ENCODE measurements at regions of chr2 and their contacts with region 1.

Region 1: DNA sequence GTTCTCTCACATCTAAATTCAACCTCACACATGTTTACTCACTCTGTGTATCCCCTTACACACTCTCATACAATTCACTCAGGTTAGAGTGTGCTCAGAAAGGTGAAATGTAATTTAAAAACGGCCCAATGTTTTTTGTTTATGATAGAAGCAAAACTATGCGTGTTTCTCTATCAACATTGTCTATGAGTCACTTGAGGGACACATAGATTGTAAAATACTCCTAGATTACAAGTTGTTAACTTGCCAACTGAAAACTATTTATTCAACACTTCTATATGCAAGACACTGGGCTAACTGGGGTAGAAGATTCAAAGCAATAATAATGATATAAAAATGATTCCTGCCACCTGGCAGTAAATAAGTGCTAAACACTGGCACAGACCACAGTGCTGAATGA is 24.6 kb downstream of the CCDC195 start:
- DNase-seq: no peak
- H3K4me3 ChIP-seq: no peak overlapping the region
- CTCF ChIP-seq: no peak
- POLR2A ChIP-seq: no peak

Region 2: DNA sequence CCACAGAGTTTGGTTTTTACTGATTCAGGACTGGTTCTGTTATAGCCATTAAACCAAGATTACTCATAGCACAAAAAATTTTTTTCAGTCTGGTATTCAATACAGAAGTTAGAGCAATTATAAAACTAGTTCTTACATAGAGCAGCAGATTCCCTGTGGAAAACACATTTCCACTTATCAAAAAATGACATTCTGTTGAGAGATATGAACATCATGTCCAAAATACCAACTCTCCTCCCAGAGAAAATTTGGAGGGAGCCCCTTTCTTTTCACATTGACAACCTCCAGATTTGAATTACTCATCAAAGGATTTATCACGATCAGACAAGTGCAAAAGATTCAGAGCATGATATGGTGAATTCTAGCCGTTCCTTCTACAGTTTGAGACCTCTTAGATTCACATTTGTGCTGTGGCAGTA is 525.7 kb before region 1 on chr2:
- intact Hi-C with region 1: loop called (anchors 5 kb)
- DNase-seq: no peak
- H3K4me3 ChIP-seq: no peak overlapping the region
- CTCF ChIP-seq: no peak
- POLR2A ChIP-seq: no peak

Region 3: GRCh38 chr2:224638301-224638823 is 53.2 kb before region 1 on chr2:
- intact Hi-C with region 1: no loop called
- DNase-seq: no peak
- H3K4me3 ChIP-seq: no peak overlapping the region
- CTCF ChIP-seq: no peak
- POLR2A ChIP-seq: no peak

Region 4: DNA sequence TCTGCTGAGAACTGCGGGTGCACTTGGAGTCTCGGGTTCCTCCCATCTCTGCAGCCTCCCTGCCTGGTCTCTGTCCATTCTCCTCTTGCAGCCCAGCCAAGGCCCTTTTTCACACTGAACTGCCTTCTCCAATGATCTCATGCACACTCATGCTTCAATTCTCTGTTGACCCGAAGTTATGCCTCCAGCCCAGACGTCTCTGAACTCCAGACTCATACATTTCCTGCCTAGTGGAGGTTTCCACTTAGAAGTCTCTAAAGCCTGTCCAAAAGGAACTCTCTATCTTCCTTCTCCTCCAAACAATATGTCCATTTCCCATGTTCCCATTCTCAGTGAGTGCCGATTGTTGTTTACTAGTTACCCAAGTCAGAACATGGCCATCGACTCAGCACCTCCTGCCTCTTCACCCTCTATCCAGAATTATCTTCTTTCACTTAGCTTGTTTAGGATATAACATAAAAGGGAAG is 1952.9 kb after region 1 on chr2:
- intact Hi-C with region 1: loop called (anchors 5 kb)
- DNase-seq: no peak
- H3K4me3 ChIP-seq: no peak overlapping the region
- CTCF ChIP-seq: no peak
- POLR2A ChIP-seq: no peak